ENCODE measurements at regions of chr3 and their contacts with region 1.

Region 1: GRCh38 chr3:176714034-176714433 is 483.2 kb downstream of the TBL1XR1 start:
- DNase-seq: no peak

Region 2: DNA sequence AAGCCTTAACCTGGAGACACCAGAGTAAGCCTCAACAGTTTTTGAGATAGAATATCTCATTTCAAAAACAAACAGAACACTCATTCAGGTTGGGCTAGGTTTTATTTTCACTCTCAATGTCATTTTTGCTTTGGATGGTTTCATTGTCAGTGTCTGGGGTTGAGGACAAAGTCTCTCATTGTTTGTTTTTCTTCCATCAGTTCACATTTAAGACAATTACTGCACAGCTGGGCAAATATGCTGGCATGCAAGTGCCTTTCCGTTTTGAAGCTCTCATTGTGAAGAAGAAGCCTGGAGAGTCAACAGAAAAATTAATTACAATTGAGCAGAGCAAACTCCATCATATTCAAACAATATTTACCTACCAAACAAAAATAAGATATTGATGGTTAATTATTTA is 566.8 kb before region 1 on chr3:
- intact Hi-C with region 1: loop called in 1 of 2 experiments (anchors 5 kb)
- DNase-seq: no peak

Region 3: GRCh38 chr3:176479291-176479690 is 234.7 kb before region 1 on chr3:
- intact Hi-C with region 1: no loop called
- DNase-seq: no peak

Region 4: GRCh38 chr3:176611703-176612102 is 102.3 kb before region 1 on chr3:
- intact Hi-C with region 1: no loop called
- DNase-seq: no peak

Region 5: GRCh38 chr3:176814285-176814684 is 100.3 kb after region 1 on chr3:
- intact Hi-C with region 1: no loop called
- DNase-seq: peak; percentile 74